Common myeloid progenitor, CD34-positive (primary cell): ENCODE measurements at regions of chr2 and their contacts with region 1.

Region 1: DNA sequence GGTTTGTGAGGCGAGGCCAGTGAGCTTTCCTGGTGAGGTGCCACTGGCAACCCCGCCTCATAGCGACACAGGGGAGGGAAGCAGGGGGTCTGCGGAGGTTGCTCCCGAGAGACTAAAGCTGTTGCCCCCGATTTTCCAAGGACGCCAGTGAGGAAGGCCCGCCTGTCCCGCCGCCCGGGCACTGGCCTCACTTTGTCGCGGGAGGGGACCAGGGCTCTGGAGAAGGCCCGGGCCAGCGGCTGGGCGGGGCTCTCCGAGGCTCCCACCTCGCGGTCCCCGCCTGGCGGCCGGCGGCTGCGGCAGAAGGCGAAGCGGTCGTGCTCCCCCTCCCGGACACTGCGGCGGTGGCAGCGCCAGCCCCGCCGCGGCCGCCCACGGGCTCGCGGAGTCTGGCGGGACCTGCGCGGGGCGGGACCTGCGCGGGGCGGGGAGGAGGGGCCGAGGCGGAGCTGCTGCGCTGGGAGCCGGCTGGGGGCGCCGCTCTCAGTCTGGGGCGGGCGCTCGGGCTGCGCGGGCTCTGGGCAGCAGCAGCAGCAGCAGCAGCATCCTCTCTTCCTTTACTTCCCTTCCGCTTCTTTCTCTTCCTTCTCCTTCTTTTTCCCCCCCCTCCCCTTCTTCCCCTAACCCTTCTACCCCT is at the start of gene MAP2:
- DNase-seq: peak; percentile 81 to 88 (median 87)
- H3K4me3 ChIP-seq: peak within 1 kb of the TSS in 6 of 7 experiments; percentile 46 to 74 (median 64)
- H3K27ac ChIP-seq: no peak within 1 kb of the TSS
- H3K4me1 ChIP-seq: peaks cover 6 to 18% (median 14%) of the 10 kb centered on the region in 4 experiments
- H3K27me3 ChIP-seq: peaks cover 0 to 42% (median 19%) of the 10 kb centered on the region in 5 experiments

Region 2: DNA sequence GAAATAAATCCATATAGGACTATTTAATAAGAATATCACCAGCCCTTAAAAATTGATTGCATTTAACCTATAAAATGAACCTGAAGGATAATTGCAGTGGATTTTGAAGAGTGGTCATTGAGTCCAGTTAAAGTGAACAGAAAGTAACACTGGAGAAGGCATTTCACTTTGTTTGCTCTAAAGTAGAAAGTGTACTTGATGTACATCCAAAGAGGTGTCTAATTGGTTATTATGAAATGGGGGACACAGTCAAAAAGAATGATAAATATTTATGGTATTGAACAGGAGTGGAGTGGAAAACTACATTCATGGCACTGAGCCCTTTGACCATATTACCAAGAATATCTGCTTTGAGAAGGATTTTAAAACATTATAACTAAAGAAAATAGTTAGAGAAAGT is 28.0 kb before region 1 on chr2:
- CTCF ChIA-PET with region 1: no interaction called
- POLR2A ChIA-PET with region 1: no interaction called
- DNase-seq: no peak
- H3K4me3 ChIP-seq: no peak overlapping the region
- H3K27ac ChIP-seq: no peak overlapping the region
- H3K4me1 ChIP-seq: no peaks in the 10 kb centered on the region
- H3K27me3 ChIP-seq: peaks cover 0 to 60% (median 25%) of the 10 kb centered on the region in 5 experiments

Region 3: DNA sequence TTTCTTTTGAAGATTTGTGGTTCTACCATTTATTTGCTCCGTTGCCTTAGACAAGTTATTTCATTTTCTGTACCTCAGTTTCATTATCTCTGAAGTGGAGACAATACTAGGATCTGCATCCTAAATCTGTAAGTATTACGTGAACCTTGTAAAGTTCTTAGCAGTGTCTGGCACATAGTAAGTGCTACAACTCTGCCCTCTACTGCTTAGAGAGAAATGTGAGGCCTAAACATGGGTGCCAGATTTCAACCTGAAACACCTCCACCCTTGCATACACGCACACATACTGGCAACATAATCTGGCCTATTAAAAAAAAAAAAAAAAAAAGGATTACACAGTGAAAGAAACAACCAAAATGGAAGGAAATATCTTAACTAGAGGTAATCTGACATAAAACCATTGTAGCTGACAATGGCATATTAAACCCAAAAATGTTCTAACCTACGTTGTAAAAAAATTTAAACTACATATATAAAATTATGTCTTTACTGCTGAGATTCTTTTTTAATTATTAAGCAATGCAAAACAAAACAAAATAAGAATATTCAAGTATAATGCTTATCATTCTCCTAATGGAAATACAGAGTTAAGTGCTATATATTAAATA is 132.8 kb after region 1 on chr2:
- CTCF ChIA-PET with region 1: interaction called, 26 read pairs
- POLR2A ChIA-PET with region 1: no interaction called
- DNase-seq: peak; percentile 42 to 70 (median 69)
- H3K4me3 ChIP-seq: no peak overlapping the region
- H3K27ac ChIP-seq: no peak overlapping the region
- H3K4me1 ChIP-seq: peaks cover 0 to 3% (median 0%) of the 10 kb centered on the region in 4 experiments
- H3K27me3 ChIP-seq: peaks cover 0 to 3% (median 0%) of the 10 kb centered on the region in 5 experiments